Cardiac septum (tissue), 1 donor: ENCODE measurements at regions of chr13 and their contacts with region 1.

Region 1: GRCh38 chr13:26062844-26063444 is 11.1 kb upstream of the SHISA2 start:
- DNase-seq: no peak

Region 2: DNA sequence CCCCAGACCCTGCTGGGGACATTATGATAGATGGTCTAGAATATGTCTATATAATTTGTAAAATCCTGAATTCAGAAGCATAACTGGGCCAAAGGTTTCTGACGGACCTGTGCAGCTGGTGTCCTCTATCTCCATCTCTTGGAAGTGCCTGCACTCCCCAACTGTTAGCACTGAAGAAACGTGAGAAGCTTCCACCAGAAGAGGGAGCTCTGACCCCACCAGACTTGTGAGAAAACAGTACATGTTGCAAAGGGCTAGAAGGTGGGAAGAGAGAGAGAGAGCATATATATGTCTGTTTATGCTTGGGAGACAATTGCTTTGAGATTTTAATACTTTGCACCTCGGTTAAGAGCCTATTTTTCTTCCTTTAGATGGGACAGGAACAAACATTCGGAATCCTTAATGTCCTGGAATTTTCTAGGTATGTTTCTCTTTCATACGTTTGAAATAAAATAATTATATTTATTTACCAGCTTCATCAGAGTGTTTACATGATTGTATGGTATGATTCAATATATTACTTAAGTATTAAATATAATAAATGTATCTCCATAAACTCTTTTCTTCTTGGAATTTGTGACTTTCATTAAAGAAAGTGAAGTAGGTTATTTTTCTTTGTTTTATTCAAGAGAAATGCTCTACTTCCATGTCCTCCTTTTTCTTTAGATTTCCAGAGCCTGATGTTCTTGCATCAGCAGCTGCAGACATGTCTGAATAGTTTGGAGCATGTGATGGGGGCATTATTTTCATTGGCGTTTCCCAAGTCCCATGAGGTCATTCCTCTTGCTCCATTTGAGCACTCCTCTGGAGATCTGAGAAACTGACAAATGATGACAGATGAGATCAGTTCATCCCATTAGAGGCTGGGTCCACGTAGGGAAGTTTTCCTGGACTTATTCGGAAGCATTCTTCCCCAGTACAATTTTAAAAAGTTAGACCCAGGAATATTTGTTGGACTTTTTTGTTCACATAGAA is 488.2 kb before region 1 on chr13:
- intact Hi-C with region 1: loop called (anchors 2 kb)
- DNase-seq: no peak

Region 3: DNA sequence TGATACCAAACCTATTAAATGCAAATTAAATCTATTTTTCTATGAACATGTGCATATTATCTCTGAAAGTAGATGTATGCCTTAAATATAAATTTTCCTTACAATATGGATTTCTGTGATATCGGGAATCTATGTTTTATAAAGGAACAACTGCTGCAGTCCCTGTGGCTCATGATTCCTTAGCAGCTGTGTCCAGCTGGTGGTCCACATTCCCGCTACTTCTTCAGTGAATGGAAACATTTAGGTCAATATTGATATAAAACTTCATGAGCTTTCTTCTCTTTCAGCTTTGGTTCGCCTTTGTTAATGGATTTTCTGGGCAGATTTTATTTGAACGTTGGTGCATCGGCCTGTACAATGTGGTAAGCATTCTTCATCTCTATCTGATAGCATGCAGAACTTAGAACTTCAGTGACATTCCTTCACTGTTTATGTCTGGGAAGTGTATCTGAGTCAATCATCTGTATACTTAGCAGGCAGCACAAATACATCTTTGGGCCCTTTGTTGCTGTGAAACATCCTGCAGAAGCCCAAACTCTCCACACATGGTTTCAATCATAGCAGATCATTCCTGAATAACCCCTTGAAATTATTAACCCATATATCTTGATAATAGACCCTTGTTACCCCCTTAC is 235.0 kb before region 1 on chr13:
- intact Hi-C with region 1: loop called (anchors 5 kb)
- DNase-seq: no peak